Dorsolateral prefrontal cortex (tissue), 120 donors: ENCODE measurements at regions of chr20 and their contacts with region 1.

Region 1: DNA sequence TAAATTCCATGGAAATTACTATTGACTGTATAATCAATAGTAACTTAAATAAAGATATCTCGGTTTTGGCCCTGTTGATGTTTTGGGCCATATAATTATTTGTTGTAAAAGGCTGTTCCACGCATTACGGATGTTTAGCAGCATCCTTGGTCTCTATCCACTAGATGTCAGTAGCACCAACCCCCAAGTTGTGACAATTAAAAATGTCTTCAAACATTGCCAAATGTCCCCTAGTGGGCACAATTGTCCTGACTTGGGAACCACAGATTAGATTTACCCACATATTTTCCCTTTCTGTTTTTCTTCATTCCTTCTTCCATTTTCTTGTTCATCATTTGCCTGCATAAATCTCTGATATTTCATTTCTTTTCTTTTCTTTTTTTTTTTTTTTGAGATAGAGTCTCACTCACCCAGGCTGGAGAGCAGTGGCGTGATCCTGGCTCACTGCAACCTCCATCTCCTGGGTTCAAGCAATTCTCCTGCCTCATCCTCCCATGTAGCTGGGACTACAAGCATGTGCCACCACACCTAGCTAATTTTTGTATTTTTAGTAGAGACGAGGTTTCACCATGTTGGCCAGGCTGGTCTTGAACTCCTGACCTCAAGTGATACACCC is 13.6 kb upstream of the WFDC8 start:
- DNase-seq: no peak
- H3K4me3 ChIP-seq: no peak overlapping the region
- H3K27ac ChIP-seq: no peak overlapping the region
- H3K27me3 ChIP-seq: peaks cover 0 to 14% (median 0%) of the 10 kb centered on the region in 45 donors
- CTCF ChIP-seq: peak; percentile 19 to 73 (median 55)

Region 2: GRCh38 chr20:45538209-45538799 is 54.4 kb before region 1 on chr20:
- intact Hi-C with region 1: loop called in 1 of 2 experiments (anchors 10 kb)
- DNase-seq: no peak
- H3K4me3 ChIP-seq: no peak overlapping the region
- H3K27ac ChIP-seq: no peak overlapping the region
- H3K27me3 ChIP-seq: peaks cover 0 to 50% (median 9%) of the 10 kb centered on the region in 45 donors
- CTCF ChIP-seq: no peak

Region 3: DNA sequence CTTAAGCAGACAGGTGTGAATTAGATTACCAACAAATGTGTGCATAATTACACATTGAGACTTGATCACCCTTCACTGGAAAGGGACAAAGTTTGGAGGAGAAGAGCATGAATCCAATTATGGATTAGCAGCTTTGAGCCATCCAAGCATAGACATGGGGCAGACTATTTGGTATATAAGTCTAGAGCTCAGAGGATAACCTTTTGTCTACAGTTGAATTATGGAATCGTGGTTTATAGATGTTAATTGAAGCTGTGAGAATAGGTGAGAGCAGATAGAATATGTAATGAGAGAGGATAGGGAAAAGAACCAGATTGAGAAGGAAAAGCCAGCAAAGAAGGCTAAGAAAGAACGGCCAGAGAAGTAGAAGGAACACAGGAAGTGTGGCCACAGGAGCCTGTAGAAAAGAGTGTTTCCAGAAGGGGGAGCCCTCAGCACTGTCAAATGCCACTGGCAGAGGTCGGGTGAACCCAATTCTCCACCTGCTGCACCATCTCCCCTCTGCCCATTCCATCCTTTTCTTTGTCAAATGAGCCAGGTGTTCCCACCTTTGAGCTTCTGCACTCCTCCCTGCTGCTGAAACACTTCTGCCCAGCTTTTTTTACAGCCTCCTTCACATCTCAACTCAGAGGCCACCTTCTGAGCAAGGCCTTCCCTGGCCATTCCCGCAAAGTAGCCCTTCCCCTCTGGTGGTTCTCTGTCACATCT is 206.4 kb after region 1 on chr20:
- intact Hi-C with region 1: no loop called
- DNase-seq: peak in 6 of 10 donors; percentile 42 to 60 (median 47)
- H3K4me3 ChIP-seq: no peak overlapping the region
- H3K27ac ChIP-seq: peak overlapping the region in 1 of 59 donors; percentile 50
- H3K27me3 ChIP-seq: no peaks in the 10 kb centered on the region
- CTCF ChIP-seq: peak; percentile 19 to 78 (median 64)